ENCODE measurements at regions of chr1 and their contacts with region 1.

Region 1: GRCh38 chr1:30779294-30780071 is 21.9 kb upstream of the LAPTM5 start:
- DNase-seq: peak; percentile 82 to 84 (median 83)
- ATAC-seq: peak; percentile 68 to 76 (median 71)
- H3K4me3 ChIP-seq: no peak overlapping the region
- H3K27ac ChIP-seq: no peak overlapping the region
- H3K4me1 ChIP-seq: peaks cover 0 to 12% (median 5%) of the 10 kb centered on the region in 4 donors
- H3K27me3 ChIP-seq: no peaks in the 10 kb centered on the region
- CTCF ChIP-seq: peak; percentile 94 to 98 (median 95)
- POLR2A ChIP-seq: no peak

Region 2: GRCh38 chr1:30719406-30720270 is 59.8 kb before region 1 on chr1:
- intact Hi-C with region 1: loop called (anchors 5 kb)
- DNase-seq: peak in 1 of 3 donors; percentile 55
- ATAC-seq: no peak
- H3K4me3 ChIP-seq: peak overlapping the region; percentile 51 to 60 (median 59)
- H3K27ac ChIP-seq: peak overlapping the region; percentile 97 to 99 (median 99)
- H3K4me1 ChIP-seq: peaks cover 0 to 7% (median 0%) of the 10 kb centered on the region in 4 donors
- H3K27me3 ChIP-seq: no peaks in the 10 kb centered on the region
- CTCF ChIP-seq: peak in 1 of 4 donors; percentile 1
- POLR2A ChIP-seq: no peak